Right lobe of liver (tissue), 6 donors: ENCODE measurements at regions of chr18 and their contacts with region 1.

Region 1: GRCh38 chr18:61893971-61894750 is 1.4 kb upstream of the RNF152 start:
- DNase-seq: peak; percentile 91 to 93 (median 93)
- ATAC-seq: peak; percentile 78 to 90 (median 83)
- H3K4me3 ChIP-seq: peak overlapping the region; percentile 62 to 83 (median 71)
- H3K27ac ChIP-seq: peak overlapping the region; percentile 83 to 99 (median 98)
- H3K4me1 ChIP-seq: peaks cover 0 to 44% (median 9%) of the 10 kb centered on the region in 4 donors
- H3K27me3 ChIP-seq: no peaks in the 10 kb centered on the region
- CTCF ChIP-seq: peak in 3 of 4 donors; percentile 33 to 52 (median 44)
- POLR2A ChIP-seq: peak; percentile 94

Region 2: GRCh38 chr18:61635901-61636528 is 258.1 kb before region 1 on chr18:
- intact Hi-C with region 1: loop called in 1 of 2 experiments (anchors 10 kb)
- DNase-seq: peak; percentile 34 to 69 (median 68)
- ATAC-seq: peak; percentile 68 to 84 (median 78)
- H3K4me3 ChIP-seq: no peak overlapping the region
- H3K27ac ChIP-seq: peak overlapping the region; percentile 53 to 88 (median 86)
- H3K4me1 ChIP-seq: peaks cover 0 to 40% (median 16%) of the 10 kb centered on the region in 4 donors
- H3K27me3 ChIP-seq: no peaks in the 10 kb centered on the region
- CTCF ChIP-seq: peak; percentile 78 to 90 (median 86)
- POLR2A ChIP-seq: peak; percentile 3

Region 3: DNA sequence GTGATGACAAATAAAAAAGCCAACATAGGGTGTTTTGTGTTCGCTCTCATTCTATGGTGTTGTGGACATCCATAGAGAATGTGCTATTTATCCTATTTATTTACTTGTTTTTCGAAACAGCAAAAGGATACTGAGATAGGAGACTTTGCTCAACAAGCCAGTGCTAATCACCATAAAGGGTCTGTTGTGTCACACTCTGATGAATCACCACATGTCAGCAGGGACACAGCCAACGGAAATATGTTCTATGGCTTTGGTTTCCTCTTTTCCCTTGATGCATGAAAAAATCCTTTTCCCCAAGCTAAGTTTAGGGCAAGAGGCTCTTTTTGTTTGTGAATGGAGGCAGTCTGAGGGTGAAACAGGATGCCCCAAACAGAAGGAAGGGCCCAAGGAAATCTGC is 155.7 kb before region 1 on chr18:
- intact Hi-C with region 1: loop called in 1 of 2 experiments (anchors 5 kb)
- DNase-seq: no peak
- ATAC-seq: peak in 1 of 4 donors; percentile 62
- H3K4me3 ChIP-seq: no peak overlapping the region
- H3K27ac ChIP-seq: peak overlapping the region; percentile 72 to 97 (median 89)
- H3K4me1 ChIP-seq: peaks cover 0 to 54% (median 25%) of the 10 kb centered on the region in 4 donors
- H3K27me3 ChIP-seq: no peaks in the 10 kb centered on the region
- CTCF ChIP-seq: no peak
- POLR2A ChIP-seq: no peak